ENCODE measurements at regions of chr1 and their contacts with region 1.

Region 1: GRCh38 chr1:207963427-207964194 is 52.7 kb upstream of the CD34 start:
- DNase-seq: peak; percentile 91
- ATAC-seq: peak; percentile 81 to 82

Region 2: DNA sequence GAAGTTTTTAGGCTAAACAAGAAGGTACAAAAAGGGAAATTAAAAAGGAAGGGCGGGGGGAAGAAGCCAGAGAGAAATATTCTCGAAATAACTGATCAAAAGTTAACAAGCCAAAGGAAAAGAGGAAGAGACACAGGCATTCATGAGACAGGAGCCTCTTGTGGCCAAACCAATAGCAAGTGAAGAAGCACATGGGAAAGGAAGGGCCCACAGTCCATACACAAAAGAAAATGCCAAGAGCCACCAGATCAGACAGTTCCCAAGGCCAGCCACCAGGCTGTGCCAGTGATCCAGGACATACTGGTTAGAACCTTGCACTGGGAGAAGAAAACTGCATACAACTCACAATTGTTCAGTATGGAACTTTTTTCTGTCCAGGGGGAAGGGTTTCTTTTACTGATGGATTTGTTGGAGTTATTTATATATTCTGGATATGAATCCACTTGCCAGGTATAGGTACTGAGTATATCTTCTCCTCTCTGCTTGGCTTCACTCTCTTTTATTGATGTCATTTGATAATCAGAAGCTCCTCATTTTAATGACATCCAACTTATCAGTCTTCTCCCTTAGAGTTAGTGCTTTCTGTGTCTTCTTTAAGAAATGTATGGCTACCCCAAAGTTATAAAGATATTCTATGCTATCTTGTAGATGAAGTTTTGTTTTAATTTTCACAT is 135.0 kb before region 1 on chr1:
- intact Hi-C with region 1: loop called in 1 of 2 experiments (anchors 5 kb)
- DNase-seq: peak; percentile 78
- ATAC-seq: peak; percentile 35 to 50

Region 3: DNA sequence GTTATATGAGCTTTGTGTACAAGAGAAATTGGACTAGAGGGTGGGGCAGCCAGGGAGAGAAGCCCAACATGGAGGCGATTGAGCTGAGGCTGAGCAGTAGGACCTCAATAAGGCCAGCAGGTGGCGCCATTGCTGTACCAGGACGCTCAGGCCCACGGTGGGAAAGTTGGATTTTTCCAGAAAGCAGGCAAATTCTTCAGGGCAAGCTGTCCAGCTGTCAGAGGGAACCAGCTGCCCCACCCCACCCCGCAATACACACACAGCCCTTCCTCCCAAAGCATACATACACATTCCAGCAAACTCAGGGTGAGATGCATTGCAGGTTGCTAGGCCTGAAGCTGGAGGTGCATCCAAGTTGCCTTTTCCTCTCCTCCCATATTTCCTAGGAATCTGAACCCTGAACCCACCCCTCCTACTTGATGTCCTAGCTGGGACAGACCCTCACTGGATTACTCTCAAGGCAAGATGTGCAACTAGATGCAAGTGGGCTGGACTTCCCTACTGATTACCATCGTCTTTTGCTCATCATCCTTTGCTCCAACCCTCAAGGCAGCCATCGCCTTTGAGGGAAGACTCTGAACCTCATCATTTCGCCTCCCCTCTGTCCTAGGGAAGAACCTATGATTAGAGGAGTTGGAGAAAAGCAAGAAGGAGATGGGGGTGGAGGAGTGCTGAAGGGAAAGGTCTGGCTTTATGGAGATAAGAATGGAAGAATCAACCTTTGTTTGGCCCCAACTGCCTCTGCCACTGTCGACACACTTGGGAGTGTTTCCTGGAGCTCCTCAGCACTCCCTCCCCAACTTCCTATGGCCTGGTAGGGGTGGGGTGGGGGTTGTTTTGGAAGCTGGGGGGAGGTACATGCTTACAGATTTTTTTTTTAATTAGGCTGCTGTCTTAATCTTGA is 78.2 kb before region 1 on chr1:
- intact Hi-C with region 1: loop called in 1 of 2 experiments (anchors 5 kb)
- DNase-seq: peak; percentile 91
- ATAC-seq: peak; percentile 89 to 91

Region 4: DNA sequence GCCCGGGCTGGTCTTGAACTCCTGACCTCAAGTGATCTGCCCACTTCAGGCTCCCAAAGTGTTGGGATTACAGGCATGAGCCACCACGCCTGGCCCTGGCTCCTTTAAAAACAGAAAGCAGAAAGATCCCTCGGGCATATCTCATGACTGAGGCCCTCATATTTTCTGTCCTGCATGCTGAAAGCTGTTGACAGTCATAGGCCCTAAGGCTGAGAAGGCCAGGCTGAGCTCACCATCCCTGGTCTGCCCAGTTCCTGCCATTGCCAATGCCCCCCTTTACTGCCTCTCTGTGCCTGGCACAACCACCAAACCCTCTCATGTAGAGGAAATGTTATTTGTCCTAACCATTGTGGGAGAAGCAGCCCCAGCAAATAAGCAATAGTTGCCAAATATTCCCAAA is 65.4 kb before region 1 on chr1:
- intact Hi-C with region 1: loop called in 1 of 2 experiments (anchors 2 kb)
- DNase-seq: no peak
- ATAC-seq: no peak

Region 5: DNA sequence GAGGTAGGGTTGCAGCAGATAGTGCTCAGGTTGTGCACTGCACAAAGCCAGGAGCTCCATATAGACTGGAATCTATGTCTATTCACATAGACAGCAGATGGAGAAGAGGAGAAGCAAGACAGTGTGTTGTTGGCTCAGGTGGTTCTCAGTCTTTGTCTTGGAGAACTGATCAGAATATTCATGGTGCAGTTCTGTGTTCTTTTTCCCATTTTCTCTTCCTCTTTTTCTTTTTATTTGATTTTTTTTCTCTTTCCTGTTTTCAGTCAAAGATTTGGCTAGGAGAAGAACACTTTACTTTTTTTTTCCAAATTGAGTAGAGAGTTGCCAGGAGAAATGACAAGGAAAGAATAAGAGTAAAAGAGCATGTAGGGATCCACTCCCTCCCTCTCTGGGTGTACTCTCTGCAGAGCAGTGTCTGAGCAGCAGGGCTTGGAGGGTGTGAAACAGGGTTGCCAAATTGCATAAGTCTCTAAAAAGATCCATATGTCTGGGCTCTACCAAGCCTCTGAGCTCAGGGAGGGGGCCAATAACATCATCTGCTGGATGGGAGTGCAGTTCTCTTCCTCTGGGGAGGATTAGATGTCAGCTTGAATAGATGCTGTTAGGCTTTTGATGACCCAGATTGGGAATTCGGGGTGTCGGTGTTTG is 44.0 kb before region 1 on chr1:
- intact Hi-C with region 1: loop called (anchors 1 to 5 kb)
- DNase-seq: no peak
- ATAC-seq: peak; percentile 51 to 69

Region 6: DNA sequence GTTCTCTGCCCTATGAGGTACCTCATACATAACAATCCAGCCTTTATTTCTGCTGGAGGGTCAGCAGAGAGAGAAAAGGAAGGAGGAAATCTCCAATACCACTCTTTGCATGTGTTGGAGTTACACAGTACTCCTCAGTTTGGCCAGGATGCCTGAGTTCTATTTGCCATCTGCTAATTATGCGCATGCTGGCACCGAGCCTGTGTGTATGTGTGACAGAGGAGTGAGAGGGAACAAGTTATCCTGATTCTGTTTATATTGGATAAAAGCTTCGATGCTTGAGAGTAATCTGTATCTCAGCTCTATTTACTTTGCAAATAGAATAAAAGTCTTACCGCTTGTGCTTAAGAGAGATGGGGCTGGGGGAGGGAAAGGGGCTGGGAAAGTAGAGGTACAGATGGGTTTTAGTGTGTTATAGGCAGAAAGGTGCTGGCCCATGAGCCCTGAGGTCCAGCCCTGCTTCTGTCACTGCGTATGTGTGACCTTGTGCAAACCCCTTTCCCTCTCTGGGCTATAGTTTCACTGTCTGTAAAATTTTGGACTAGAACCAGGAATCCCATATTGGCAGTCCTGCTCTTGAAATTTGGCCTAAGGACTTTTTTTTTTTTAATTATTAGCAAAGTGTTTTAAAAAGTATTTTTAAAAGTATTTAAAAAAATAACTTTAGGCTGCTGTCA is 335.1 kb after region 1 on chr1:
- intact Hi-C with region 1: no loop called
- DNase-seq: peak; percentile 46
- ATAC-seq: no peak

Measured in left cardiac atrium (tissue), 4 donors.